Vagina (tissue), 2 donors: ENCODE measurements at regions of chr10 and their contacts with region 1.

Region 1: DNA sequence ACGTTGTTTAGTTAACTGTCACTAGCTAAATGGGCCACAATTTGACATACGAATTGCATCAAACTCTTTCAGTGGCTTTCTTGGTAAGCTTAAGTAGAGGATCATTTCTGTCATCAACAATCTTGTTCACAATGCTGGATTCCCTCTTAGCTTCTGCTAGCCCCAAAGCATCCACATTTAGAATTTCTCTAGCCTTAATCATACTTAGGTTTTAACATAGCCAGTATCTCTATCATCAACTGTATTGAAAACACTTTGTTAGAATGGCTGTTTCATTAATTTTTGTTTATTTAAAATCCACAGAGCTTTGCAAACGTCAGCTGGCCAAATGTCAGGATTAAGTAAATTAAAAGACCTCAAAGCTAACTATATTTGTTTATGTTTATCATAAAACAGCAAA is 41.1 kb downstream of the ABRAXAS2 start:
- DNase-seq: no peak
- H3K4me3 ChIP-seq: no peak overlapping the region
- H3K27ac ChIP-seq: no peak overlapping the region
- H3K4me1 ChIP-seq: no peaks in the 10 kb centered on the region
- H3K27me3 ChIP-seq: no peaks in the 10 kb centered on the region
- CTCF ChIP-seq: no peak
- POLR2A ChIP-seq: no peak

Region 2: DNA sequence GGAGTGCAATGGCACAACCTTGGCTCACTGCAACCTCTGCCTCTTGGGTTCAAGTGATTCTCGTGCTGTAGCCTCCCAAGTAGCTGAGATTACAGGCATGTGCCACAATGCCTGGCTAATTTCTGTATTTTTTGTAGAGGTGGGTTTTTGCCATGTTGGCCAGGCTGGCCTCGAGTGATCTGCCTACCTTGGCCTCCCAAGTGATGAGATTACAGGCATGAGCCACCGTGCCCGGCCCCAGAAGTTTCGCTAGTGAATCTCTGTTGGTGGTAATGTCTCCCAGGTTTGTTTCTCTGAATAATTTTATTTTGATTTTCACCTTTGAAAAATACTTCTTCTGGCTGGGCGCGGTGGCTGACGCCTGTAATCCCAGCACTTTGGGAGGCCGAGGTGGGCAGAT is 17.7 kb after region 1 on chr10:
- intact Hi-C with region 1: loop called (anchors 1 kb)
- DNase-seq: no peak
- H3K4me3 ChIP-seq: no peak overlapping the region
- H3K27ac ChIP-seq: no peak overlapping the region
- H3K4me1 ChIP-seq: no peaks in the 10 kb centered on the region
- H3K27me3 ChIP-seq: no peaks in the 10 kb centered on the region
- CTCF ChIP-seq: no peak
- POLR2A ChIP-seq: no peak

Region 3: DNA sequence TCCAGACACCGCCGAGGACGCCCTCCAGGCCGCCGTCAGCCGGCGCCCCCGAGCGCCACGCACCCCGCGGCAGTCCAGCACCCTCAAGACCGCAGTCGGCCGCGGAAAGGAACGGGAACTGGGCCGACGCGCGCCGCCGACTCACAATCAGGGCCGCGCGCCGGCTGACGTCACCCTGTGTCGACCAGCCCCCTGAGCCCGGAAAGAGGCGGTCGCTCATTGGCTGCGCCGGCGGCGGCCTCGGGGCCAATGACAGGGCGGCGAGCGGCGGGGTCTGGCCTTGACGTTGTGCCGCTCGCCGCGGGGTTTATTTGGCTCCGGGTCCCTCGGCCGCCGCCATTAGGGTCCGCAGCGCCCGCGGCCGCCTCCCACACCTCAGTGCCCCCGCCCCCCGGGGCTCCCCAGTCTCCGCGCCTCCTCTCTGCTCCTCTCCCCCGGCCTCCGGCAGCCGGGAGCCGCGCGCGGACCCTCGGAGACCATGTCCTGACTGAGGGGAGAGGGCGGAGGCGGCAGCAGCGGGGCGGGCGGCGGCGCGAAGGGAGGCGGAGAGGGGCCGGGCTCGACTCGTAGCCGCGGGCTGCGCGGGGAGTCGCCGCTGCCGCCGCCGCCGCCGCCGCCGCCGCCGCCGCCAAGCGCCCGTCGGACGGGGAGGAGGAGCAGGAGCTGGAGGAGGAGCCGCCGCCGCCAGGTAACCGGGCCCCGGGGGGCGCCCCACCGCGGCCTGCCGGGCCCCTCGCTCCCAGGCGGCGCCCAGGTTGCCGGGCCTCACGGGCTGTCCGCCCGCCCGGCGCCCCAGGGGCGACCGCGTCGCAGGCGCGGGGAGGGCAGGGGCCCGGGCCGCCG is 74.1 kb after region 1 on chr10:
- intact Hi-C with region 1: no loop called
- DNase-seq: peak in 1 of 2 donors; percentile 95
- H3K4me3 ChIP-seq: peak overlapping the region; percentile 83 to 87
- H3K27ac ChIP-seq: peak overlapping the region; percentile 97
- H3K4me1 ChIP-seq: peaks cover 46% of the 10 kb centered on the region
- H3K27me3 ChIP-seq: no peaks in the 10 kb centered on the region
- CTCF ChIP-seq: no peak
- POLR2A ChIP-seq: peak in 1 of 2 donors; percentile 89

Region 4: GRCh38 chr10:125171402-125172306 is 328.9 kb after region 1 on chr10:
- intact Hi-C with region 1: no loop called
- DNase-seq: no peak
- H3K4me3 ChIP-seq: no peak overlapping the region
- H3K27ac ChIP-seq: no peak overlapping the region
- H3K4me1 ChIP-seq: no peaks in the 10 kb centered on the region
- H3K27me3 ChIP-seq: no peaks in the 10 kb centered on the region
- CTCF ChIP-seq: no peak
- POLR2A ChIP-seq: no peak

Region 5: DNA sequence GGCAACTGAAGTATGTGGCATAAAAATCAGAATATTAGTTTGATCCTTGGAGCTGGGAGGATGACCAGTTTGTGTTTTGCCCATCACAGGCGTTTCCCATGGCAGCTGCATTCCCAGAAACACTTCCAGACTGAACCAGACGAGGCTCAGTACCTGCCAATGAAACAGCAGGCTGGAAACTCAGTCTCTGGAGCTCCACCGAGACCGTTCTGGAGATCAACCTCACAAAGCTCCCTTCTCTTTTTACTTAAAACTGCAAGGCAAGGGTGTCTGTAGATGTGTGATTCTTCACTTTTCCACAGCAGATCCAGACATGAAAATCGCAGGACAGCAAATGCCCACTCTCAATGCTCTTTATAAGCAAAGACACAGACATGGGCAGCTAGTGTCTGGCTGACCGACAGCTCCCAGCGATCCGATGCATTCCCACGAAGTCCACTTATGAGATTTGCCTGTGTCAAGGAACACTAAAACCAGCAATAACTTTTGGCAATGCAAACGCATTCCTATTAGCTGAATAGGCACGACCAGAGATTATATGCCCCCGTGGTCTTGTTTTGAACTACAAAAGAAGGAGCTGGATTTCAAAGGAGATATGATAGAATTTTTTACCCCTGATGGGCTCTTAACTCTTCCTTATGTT is 1472.9 kb after region 1 on chr10:
- intact Hi-C with region 1: no loop called
- DNase-seq: no peak
- H3K4me3 ChIP-seq: no peak overlapping the region
- H3K27ac ChIP-seq: no peak overlapping the region
- H3K4me1 ChIP-seq: peaks cover 9% of the 10 kb centered on the region
- H3K27me3 ChIP-seq: no peaks in the 10 kb centered on the region
- CTCF ChIP-seq: no peak
- POLR2A ChIP-seq: no peak